Left cardiac atrium (tissue), 4 donors: ENCODE measurements at regions of chr1 and their contacts with region 1.

Region 1: DNA sequence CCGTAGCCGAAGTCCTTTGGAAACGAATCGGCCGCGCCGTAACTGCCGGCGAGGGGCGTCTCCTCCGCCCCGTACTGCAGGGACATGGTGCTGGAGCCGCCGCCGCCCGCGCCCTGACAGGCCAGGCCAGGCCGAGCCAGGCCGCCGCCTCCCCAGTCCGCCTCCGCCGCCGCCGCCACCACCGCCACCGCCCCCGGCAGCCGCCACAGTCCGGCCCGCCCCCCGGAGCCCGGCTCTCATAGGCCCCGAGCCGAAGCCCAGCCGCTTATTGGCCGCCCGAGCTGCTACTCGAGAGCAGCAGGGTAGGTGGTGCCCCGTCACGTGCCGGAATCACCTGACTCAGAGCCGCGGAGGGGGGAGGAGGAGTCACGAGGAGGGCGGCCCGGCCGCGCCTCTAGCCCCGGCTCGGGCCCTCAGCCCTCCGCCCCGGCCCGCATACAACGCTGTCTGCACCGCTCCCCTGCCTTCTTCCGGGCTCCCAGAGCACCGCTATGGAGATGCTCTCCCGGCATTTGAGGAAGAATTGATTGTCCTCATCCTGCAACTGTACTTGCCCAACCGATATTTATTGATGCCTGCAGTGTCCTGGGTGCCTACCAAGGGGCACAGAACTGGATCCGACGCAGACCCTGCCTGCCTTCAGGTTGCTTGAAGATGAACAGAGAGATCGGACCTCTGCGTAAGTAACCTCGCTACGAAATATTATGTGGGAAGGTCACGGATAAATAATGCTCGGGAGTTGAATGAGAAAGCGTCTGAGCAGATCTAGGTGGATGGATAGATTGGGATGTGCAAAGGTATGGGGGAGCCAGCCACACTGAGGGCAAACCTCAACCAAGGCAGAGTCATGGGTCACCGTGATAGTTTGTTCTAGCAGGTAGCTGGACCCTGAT is at the start of gene RRAGC:
- DNase-seq: peak; percentile 100
- ATAC-seq: peak; percentile 99
- total RNA-seq, gene RRAGC: 20.9 to 21.3 TPM

Region 2: DNA sequence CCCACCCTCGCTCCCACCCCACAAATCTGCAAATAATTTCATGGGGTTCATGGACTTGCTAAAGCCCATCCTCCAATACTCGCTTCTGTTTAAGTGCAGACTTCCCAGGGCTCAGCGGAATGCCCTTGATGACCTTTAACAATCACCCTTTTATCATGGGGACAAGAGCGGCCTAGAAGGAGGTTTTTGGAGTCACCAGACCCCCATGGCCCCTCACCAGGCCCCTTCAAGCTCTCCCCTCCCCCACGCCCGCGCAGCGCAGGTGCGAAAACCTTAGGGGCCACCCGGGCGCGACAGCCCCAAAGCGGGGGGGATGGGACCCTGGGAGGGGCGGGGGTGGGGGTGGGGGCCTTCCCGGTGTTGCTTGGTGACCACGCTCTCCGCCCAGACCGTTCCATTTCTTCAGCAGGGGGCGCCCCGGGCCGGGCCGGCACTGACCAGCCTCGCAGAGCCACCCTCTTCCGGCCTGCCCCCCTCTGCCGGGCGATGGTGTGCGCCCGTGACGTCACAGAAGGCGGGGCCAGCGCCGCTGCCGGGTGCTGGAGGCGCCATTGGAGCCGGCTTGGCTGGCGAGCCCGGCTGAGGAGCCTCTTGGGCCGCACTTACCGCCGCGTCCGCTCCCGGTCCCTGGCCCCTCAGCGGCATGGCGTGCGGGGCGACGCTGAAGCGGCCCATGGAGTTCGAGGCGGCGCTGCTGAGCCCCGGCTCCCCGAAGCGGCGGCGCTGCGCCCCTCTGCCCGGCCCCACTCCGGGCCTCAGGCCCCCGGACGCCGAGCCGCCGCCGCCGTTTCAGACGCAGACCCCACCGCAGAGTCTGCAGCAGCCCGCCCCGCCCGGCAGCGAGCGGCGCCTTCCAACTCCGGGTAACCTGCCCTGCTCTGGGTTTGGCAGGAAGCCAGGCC is 131.2 kb after region 1 on chr1 and contains the start of gene AKIRIN1:
- intact Hi-C with region 1: loop called in 1 of 2 experiments (anchors 10 kb)
- DNase-seq: peak; percentile 98
- ATAC-seq: peak; percentile 98
- total RNA-seq, gene AKIRIN1: 42.4 to 63.9 TPM

Region 3: GRCh38 chr1:39672551-39672947 is 812.7 kb after region 1 on chr1:
- intact Hi-C with region 1: no loop called
- DNase-seq: no peak
- ATAC-seq: peak; percentile 25 to 35